ENCODE measurements at regions of chr16 and their contacts with region 1.

Region 1: GRCh38 chr16:87778830-87779579 is 13.2 kb upstream of the KLHDC4 start:
- DNase-seq: peak; percentile 95 to 97
- ATAC-seq: peak; percentile 94
- H3K4me3 ChIP-seq: no peak overlapping the region
- H3K27ac ChIP-seq: no peak overlapping the region
- H3K4me1 ChIP-seq: no peaks in the 10 kb centered on the region
- H3K27me3 ChIP-seq: no peaks in the 10 kb centered on the region

Region 2: DNA sequence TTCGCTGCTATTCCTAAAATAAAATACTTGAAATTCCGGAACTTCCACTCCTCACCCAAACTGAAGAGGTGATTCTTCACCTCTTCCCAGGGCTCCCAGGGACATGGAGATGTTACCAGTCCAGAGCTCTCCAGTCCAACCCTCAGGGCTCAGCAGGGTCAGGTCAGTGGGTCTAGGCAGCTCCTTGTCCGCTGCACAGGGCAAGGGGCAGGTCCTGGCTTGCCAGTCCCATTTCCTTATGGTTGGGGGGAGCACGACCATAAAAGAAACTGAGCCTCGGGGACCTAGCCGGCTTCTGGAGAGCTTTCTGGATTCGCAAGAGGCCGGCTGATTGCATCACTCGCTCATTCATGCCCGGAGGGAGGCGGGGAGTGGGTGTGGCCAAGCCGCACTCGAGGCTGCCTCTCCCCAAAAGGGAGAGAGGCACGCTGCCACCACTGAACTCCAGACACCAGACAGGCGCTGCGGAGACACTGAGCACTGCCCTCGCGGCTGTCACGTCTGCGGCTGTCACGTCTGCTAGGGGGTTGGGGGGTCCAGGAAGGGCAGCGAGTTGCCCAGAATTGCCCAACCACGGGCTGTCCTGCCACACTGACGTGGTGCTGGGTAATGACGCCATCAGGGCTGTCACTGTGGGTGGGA is 74.5 kb after region 1 on chr16:
- intact Hi-C with region 1: loop called (anchors 5 kb)
- DNase-seq: peak; percentile 97
- ATAC-seq: peak; percentile 92
- H3K4me3 ChIP-seq: peak overlapping the region in 1 of 2 donors; percentile 16
- H3K27ac ChIP-seq: peak overlapping the region in 1 of 2 donors; percentile 42
- H3K4me1 ChIP-seq: no peaks in the 10 kb centered on the region
- H3K27me3 ChIP-seq: no peaks in the 10 kb centered on the region

Region 3: GRCh38 chr16:87874639-87875465 is 95.8 kb after region 1 on chr16:
- intact Hi-C with region 1: loop called (anchors 1 to 5 kb)
- DNase-seq: no peak
- ATAC-seq: no peak
- H3K4me3 ChIP-seq: no peak overlapping the region
- H3K27ac ChIP-seq: no peak overlapping the region
- H3K4me1 ChIP-seq: no peaks in the 10 kb centered on the region
- H3K27me3 ChIP-seq: no peaks in the 10 kb centered on the region

Region 4: DNA sequence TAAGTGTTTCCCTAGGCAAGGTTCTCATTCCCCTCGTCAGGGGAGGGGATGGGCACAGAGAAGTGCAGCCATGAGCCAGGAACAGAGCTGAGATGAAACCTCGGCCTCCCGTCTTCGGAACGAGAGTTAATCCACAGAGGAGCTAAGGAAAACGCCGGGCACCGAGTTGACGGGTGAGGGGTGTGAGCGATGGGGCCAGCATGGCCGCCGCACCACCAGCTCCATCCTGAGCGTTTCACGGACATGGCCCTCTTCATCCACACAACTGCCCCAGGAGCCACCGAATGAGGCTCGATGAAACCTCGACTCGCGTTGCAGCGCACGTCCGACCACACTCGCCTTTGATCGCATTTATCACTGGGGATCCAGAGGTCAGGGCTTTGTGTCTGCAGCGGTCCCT is 135.8 kb after region 1 on chr16:
- intact Hi-C with region 1: loop called in 1 of 2 experiments (anchors 2 kb)
- DNase-seq: no peak
- ATAC-seq: no peak
- H3K4me3 ChIP-seq: no peak overlapping the region
- H3K27ac ChIP-seq: no peak overlapping the region
- H3K4me1 ChIP-seq: no peaks in the 10 kb centered on the region
- H3K27me3 ChIP-seq: no peaks in the 10 kb centered on the region